Tibial artery (tissue), 4 donors: ENCODE measurements at regions of chr20 and their contacts with region 1.

Region 1: GRCh38 chr20:34558320-34559218 is at the start of gene MAP1LC3A:
- DNase-seq: peak; percentile 94 to 98
- H3K4me3 ChIP-seq: peak within 1 kb of the TSS; percentile 61 to 78
- H3K27ac ChIP-seq: peak within 1 kb of the TSS; percentile 94 to 95
- H3K4me1 ChIP-seq: peaks cover 0 to 16% (median 8%) of the 10 kb centered on the region in 4 donors
- H3K27me3 ChIP-seq: no peaks in the 10 kb centered on the region
- CTCF ChIP-seq: no peak

Region 2: GRCh38 chr20:33233129-33233774 is 1325.3 kb before region 1 on chr20:
- intact Hi-C with region 1: no loop called
- DNase-seq: peak in 1 of 2 donors; percentile 28
- H3K4me3 ChIP-seq: no peak overlapping the region
- H3K27ac ChIP-seq: no peak overlapping the region
- H3K4me1 ChIP-seq: no peaks in the 10 kb centered on the region
- H3K27me3 ChIP-seq: peaks cover 0 to 27% of the 10 kb centered on the region in 2 donors
- CTCF ChIP-seq: no peak

Region 3: DNA sequence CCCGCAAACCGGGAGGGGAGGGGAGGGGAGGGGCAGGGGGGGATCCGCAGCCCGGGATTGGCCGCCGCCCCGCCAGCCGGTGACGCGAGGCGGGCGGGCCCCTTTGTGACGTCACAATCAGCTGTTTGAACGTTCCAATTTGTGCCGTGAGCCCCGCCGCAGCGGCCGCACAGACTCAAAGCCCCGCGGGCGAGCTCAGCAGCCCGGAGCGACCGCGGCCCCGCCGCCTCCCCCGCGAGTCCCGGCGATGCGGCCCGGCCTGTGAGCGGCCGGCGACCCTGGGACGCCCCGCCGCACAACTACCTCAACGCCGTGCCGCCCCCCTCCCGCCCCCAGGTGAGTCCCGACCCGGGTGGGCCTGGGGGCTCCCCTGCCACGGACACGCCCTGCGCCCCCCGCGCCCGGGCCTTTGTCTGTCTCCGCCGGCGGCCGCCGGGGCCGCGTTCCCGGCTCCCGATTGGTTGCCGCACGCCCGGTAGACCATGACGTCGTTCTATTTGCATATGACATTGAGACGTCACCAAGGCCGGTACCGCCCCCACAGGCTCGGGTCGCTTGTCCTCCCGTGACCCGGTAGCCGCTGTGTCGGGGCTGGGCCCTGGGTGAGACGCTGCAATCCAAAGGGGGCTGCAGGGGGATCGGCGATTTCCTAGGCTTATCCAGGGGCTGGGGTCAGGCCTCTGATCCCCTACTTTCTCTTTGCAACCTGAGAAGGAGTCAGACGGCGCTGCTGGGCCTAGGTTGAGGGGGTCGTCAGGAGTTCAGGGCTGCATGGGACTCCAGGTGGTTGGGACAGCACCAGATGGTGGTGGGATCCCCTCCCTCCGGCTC is 145.8 kb after region 1 on chr20 and contains the start of gene TP53INP2:
- intact Hi-C with region 1: loop called (anchors 5 kb)
- DNase-seq: peak; percentile 91 to 96
- H3K4me3 ChIP-seq: peak within 1 kb of the TSS; percentile 84 to 88
- H3K27ac ChIP-seq: peak within 1 kb of the TSS; percentile 96 to 99
- H3K4me1 ChIP-seq: peaks cover 0 to 30% (median 19%) of the 10 kb centered on the region in 4 donors
- H3K27me3 ChIP-seq: no peaks in the 10 kb centered on the region
- CTCF ChIP-seq: no peak